K562 (cell line): ENCODE measurements at regions of chr18 and their contacts with region 1.

Region 1: DNA sequence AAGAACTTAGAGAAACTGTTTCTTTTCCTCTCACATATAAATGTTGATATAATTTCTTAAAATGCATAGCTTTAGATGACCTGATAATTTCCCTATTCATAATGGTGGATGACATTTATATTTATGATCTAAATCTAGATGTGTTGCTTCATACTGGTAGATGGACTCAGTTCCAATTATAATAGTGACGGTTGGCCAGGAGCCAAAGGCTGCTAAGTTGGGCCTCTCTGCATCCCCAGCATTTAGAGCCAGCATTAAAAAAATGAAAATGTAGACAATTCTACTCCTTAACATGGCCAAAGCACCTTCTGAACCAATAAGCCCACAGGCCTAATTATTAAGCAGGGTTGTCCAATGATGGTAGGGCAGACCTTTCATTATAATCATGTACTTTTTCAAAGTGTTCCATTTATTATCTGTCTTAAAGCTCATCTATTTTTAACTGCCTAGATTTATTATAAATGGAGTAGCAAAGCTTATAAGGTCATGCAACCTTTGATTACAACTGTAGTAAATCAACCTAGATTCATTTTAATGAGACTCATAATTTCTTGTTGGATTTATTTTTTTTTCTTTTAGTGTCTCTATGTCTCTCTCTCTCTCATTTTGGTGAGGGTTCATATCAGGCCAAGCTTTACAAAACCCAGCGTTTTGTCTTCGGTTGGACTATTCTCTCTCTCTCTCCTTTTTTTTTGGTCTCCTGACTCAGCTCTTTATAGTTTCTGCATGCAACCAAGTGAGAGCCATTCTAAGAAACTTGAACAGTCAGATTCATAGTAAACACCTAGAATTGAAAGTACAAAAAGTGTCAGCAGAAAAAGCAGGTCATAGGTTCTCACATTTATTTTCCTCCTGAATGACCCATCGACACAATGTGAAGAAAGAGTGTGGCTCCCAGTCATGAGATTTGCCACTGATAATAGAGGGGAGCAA is 2016.1 kb upstream of the PIK3C3 start:
- DNase-seq: no peak
- ATAC-seq: no peak
- H3K4me3 ChIP-seq: no peak overlapping the region
- H3K27ac ChIP-seq: no peak overlapping the region
- H3K4me1 ChIP-seq: no peaks in the 10 kb centered on the region
- H3K27me3 ChIP-seq: no peaks in the 10 kb centered on the region
- CTCF ChIP-seq: no peak
- EP300 ChIP-seq: no peak
- POLR2A ChIP-seq: no peak
- RAD21 ChIP-seq: no peak

Region 2: DNA sequence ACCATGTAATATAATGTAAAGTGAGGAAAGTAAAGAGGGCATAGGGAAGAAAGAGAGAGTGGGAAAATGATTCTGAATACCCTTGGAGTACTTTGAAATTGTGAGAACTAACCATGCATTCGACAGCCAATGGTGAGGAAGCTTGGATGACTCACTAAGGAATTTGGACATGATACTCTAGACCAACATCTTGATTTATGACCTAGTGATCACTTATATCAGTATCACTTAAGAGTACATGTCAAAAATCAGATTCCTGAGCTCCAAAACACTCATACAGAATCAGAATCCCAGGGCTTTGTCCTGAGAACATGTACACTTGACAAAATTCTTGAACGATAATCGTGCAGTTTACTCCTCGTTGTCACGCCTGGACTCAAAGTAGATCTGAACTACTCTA is 116.3 kb after region 1 on chr18:
- CTCF ChIA-PET with region 1: no interaction called
- POLR2A ChIA-PET with region 1: no interaction called
- in situ Hi-C with region 1: no loop called
- intact Hi-C with region 1: no loop called
- DNase-seq: no peak
- ATAC-seq: no peak
- H3K4me3 ChIP-seq: no peak overlapping the region
- H3K27ac ChIP-seq: no peak overlapping the region
- H3K4me1 ChIP-seq: no peaks in the 10 kb centered on the region
- H3K27me3 ChIP-seq: no peaks in the 10 kb centered on the region
- CTCF ChIP-seq: no peak
- EP300 ChIP-seq: no peak
- POLR2A ChIP-seq: no peak
- RAD21 ChIP-seq: no peak

Region 3: DNA sequence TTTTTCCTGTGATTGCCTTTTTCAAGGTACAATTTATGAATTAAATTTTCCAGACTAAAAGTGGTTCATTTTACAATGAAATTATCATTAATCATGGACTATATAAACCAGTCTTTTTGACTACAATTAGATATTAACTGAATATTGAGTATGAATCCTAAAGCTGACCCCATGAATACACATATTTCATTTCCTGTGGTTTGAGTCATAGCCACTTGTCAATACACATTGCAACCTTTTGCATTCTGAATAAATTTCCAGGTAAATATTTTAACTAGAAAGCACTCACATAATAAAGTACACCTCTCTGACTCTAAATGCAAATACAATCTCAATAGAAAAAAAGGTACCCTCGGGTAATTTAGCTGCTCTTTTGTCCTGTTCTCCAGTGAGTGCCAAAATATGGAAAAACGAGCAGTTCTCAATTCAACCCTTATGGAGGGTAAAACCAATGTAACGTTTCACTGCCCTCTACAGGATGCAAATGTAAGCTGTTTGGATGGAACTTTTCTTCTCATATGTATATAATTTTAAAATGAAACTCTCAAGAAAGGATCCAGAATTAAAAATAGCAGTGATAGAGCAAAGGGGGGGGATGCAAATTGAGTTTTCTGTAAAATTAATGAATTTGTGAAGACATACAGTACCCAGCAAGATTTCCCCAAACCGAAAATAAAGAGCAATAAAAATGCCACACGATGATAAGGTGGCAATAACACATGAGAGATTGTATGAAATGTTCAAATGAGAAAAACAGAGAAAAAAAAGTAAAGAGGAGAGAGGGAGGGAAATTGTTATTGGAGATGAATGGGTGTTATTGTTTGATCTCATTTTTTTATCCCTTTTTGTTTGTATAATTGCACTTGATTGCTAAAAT is 220.4 kb after region 1 on chr18:
- CTCF ChIA-PET with region 1: no interaction called
- POLR2A ChIA-PET with region 1: no interaction called
- in situ Hi-C with region 1: loop called (anchors 10 kb)
- intact Hi-C with region 1: no loop called
- DNase-seq: peak in 1 of 4 experiments; percentile 13
- ATAC-seq: no peak
- H3K4me3 ChIP-seq: no peak overlapping the region
- H3K27ac ChIP-seq: no peak overlapping the region
- H3K4me1 ChIP-seq: no peaks in the 10 kb centered on the region
- H3K27me3 ChIP-seq: no peaks in the 10 kb centered on the region
- CTCF ChIP-seq: 0 out of 6 replicates have a peak, but pooled peaks of 1 of the 3 experiments have one; percentile 9
- EP300 ChIP-seq: no peak
- POLR2A ChIP-seq: no peak
- RAD21 ChIP-seq: peak in 1 of 2 experiments; percentile 19; a peak in 1 of 4 replicates